PC-9 (cell line): ENCODE measurements at regions of chr17 and their contacts with region 1.

Region 1: DNA sequence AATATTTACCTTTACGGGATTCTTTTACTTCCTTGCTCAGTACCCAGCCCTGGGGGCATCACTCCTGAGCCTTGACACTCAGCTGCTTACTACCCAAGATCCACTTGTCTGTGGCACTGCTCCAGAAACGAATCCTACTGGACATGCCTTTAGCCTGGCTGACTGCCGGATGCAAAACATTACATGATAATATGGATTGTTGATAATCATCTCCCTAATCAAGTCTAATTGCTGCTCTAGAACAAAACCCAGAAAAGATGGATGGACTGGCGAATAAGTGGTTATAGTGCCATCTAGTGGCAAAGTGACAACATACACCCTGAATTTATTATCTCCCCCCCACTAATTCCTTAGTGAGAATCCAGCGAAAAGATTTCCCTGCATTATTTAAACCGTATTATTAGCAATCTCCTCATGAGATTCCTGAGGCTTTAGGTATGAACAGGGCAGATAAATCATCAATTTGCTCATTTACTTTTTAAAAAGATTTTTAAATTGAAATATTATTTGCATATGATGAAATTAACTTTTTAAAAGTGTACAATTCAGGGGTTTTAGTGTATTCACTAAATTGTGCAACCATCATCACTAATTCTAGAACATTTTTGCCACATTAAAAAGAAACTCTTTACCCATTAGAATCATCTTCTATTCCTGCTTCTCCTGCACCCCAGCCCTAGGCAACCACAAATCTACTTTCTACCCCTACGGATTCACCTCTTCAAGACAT is 61.6 kb downstream of the RGS9 start:
- DNase-seq: peak; percentile 27 to 47
- H3K4me3 ChIP-seq: no peak overlapping the region
- H3K27ac ChIP-seq: no peak overlapping the region
- H3K4me1 ChIP-seq: no peaks in the 10 kb centered on the region; the same call in 1 of the 2 replicates
- H3K27me3 ChIP-seq: no peaks in the 10 kb centered on the region
- CTCF ChIP-seq: peak; percentile 91

Region 2: GRCh38 chr17:64565563-64565962 is 633.3 kb before region 1 on chr17:
- CTCF ChIA-PET with region 1: no interaction called
- POLR2A ChIA-PET with region 1: interaction called, 20 read pairs
- intact Hi-C with region 1: no loop called
- DNase-seq: no peak
- H3K4me3 ChIP-seq: no peak overlapping the region
- H3K27ac ChIP-seq: no peak overlapping the region
- H3K4me1 ChIP-seq: no peaks in the 10 kb centered on the region
- H3K27me3 ChIP-seq: no peaks in the 10 kb centered on the region
- CTCF ChIP-seq: no peak

Region 3: GRCh38 chr17:64773836-64774761 is 424.7 kb before region 1 on chr17:
- CTCF ChIA-PET with region 1: no interaction called
- POLR2A ChIA-PET with region 1: no interaction called
- intact Hi-C with region 1: loop called (anchors 10 kb)
- DNase-seq: peak; percentile 90 to 96
- H3K4me3 ChIP-seq: peak overlapping the region; percentile 71
- H3K27ac ChIP-seq: peak overlapping the region; percentile 61
- H3K4me1 ChIP-seq: peaks cover 18% of the 10 kb centered on the region
- H3K27me3 ChIP-seq: no peaks in the 10 kb centered on the region
- CTCF ChIP-seq: peak; percentile 72

Region 4: DNA sequence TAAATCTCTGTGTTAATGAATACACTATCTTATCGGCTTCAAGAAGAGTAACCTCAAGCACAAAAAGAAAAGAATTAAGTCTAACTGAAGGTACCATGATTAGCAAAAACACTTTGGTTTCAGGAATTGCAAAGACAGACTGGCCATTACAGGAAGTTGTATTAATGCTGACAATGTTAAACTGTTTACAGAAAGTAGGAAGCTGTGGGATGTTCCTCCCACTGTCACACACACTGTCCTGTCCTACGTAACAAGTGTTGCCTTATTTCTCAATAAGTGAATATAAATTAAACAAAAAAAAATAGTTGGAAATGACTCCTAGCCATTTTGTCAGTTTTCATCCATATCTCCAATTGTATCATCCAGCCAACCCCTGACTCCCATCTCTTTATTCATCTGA is 150.9 kb before region 1 on chr17:
- CTCF ChIA-PET with region 1: no interaction called
- POLR2A ChIA-PET with region 1: no interaction called
- intact Hi-C with region 1: no loop called
- DNase-seq: no peak
- H3K4me3 ChIP-seq: no peak overlapping the region
- H3K27ac ChIP-seq: no peak overlapping the region
- H3K4me1 ChIP-seq: no peaks in the 10 kb centered on the region
- H3K27me3 ChIP-seq: no peaks in the 10 kb centered on the region
- CTCF ChIP-seq: no peak

Region 5: DNA sequence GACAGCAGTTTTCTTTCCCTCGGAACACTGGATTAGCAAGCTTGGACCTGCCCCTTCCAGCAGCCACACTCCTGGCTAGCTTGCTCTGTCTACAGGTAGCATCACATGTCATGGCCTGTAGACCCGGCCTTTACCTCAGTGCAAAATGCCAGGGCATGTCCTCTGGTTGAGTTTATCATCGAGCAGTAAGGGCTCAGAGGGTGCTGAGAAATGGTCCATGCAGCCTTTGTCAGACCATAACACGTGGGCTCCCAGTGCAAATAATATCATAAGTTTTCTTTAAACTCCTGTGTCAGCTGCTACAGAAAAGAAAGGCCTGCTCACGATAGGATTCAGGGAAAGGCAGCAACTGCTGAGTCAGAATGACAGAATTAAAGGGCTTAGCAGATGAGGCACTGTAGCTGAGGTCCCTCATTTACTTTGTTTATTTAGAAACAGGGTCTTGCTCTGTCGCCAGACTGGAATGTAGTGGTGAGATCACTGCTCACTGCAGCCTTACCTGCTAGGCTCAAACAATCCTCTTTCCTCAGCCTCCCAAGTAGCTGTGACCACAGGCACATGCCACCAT is 134.3 kb before region 1 on chr17:
- CTCF ChIA-PET with region 1: no interaction called
- POLR2A ChIA-PET with region 1: no interaction called
- intact Hi-C with region 1: loop called (anchors 5 kb)
- DNase-seq: peak; percentile 42 to 90
- H3K4me3 ChIP-seq: no peak overlapping the region
- H3K27ac ChIP-seq: peak overlapping the region; percentile 86
- H3K4me1 ChIP-seq: peaks cover 59% of the 10 kb centered on the region
- H3K27me3 ChIP-seq: no peaks in the 10 kb centered on the region
- CTCF ChIP-seq: no peak

Region 6: GRCh38 chr17:65137021-65137991 is 61.5 kb before region 1 on chr17 and contains the start of gene RGS9:
- CTCF ChIA-PET with region 1: no interaction called
- POLR2A ChIA-PET with region 1: no interaction called
- intact Hi-C with region 1: loop called (anchors 1 kb)
- DNase-seq: peak; percentile 49 to 86
- H3K4me3 ChIP-seq: peak within 1 kb of the TSS; percentile 49
- H3K27ac ChIP-seq: no peak within 1 kb of the TSS
- H3K4me1 ChIP-seq: peaks cover 11% of the 10 kb centered on the region; the same call in 1 of the 2 replicates
- H3K27me3 ChIP-seq: peaks cover 10% of the 10 kb centered on the region; the same call in 1 of the 2 replicates
- CTCF ChIP-seq: peak; percentile 98
- total RNA-seq, gene RGS9: 5.7 and 6.1 TPM in 2 replicates

Region 7: DNA sequence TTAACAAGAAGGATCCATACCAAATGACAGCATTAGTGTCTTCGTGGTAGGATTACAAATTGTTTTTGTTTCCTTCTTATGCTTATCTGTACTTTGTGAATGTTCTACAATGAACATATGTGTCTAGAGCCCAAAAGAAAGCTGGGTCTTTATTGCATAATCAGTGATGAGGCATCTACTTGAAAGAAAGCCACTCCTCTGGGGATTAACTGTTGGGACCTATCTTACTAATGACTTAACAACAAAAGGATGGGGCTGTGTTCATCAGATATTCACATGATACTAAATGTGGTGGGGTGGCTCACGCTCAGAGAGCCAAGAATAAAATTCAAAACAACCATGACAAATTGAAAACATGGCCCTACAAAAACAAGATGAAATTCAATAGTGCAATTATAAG is 98.6 kb after region 1 on chr17:
- CTCF ChIA-PET with region 1: no interaction called
- POLR2A ChIA-PET with region 1: no interaction called
- intact Hi-C with region 1: no loop called
- DNase-seq: no peak
- H3K4me3 ChIP-seq: no peak overlapping the region
- H3K27ac ChIP-seq: no peak overlapping the region
- H3K4me1 ChIP-seq: no peaks in the 10 kb centered on the region
- H3K27me3 ChIP-seq: no peaks in the 10 kb centered on the region
- CTCF ChIP-seq: no peak